ENCODE measurements at regions of chr1 and their contacts with region 1.

Region 1: GRCh38 chr1:182595641-182596240 is 6.7 kb upstream of the RNASEL start:
- DNase-seq: peak; percentile 30
- ATAC-seq: peak; percentile 62
- H3K4me3 ChIP-seq: no peak overlapping the region
- H3K27ac ChIP-seq: no peak overlapping the region
- H3K4me1 ChIP-seq: no peaks in the 10 kb centered on the region
- H3K27me3 ChIP-seq: no peaks in the 10 kb centered on the region; a peak in 1 of 5 replicates
- CTCF ChIP-seq: peak; percentile 68
- EP300 ChIP-seq: no peak
- POLR2A ChIP-seq: no peak
- RAD21 ChIP-seq: no peak

Region 2: DNA sequence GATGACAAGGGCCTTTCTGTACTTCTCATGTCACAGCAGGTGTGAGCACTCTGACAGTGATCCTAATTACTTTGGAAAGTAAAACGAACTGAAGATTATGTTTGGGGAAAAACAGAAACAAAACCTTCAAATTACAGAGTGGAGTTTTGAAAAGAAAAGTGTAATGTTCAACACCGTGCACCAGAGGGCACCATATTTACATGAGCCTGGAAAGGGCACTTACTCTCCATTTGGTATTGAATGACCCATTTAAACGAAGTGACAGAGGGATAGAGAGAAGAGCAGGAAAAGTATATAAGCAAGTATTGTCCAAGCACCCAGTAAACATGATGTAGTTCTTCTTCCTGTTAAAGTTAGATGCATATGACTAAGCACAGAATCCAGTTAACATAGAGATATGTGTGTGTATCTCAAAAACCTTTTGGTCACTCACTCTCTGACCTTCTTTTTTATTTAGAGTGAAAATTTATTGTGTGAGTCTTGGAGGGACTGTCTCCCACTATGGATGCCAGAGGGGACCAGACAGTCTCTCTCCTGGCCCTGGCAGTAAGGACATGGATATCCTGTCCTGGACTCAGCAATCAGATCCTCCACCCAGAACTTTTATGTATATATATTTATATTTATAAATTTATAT is 149.6 kb before region 1 on chr1:
- CTCF ChIA-PET with region 1: no interaction called
- POLR2A ChIA-PET with region 1: no interaction called
- in situ Hi-C with region 1: loop called (anchors 10 kb)
- intact Hi-C with region 1: loop called (anchors 5 kb)
- DNase-seq: peak; percentile 39
- ATAC-seq: peak; percentile 65
- H3K4me3 ChIP-seq: no peak overlapping the region
- H3K27ac ChIP-seq: no peak overlapping the region
- H3K4me1 ChIP-seq: no peaks in the 10 kb centered on the region
- H3K27me3 ChIP-seq: no peaks in the 10 kb centered on the region
- CTCF ChIP-seq: peak; percentile 76
- EP300 ChIP-seq: no peak
- POLR2A ChIP-seq: no peak
- RAD21 ChIP-seq: peak; percentile 43; the same call in 1 of the 2 replicates

Region 3: DNA sequence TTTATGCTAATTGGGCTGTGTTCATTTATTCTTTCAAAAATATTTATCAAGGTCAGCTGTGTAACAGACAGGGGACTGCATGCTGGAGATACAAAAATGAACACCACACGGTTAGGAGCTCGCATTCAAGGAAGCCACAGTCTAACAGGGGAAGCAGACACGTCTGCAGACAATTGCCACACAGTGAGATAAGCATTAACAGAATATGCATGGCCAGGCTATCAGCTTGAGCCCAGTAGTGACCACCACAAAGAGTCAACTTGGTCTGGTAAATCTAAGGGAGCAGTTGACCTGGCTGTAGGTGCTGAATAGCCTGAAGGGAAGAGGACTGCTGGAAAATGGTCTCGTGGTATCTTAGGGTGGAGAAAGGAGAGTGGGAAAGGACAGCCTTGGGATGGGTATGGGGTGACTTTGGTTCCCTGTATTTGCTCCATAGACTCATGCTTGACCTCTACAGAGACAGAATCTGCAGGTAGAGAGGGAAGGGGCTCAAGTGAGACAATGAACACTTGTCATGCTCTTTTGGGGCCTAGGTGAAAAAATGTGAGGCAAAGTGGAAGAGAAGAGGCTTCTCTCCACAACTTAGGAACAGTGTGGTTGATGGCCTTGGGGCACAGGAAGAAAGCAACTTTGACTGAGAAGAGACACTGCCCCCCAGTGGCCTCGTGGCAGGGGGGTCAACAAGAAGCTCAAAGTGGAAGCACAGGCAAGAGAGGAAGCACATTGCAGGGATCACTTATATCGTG is 186.3 kb after region 1 on chr1:
- CTCF ChIA-PET with region 1: interaction called, 44 read pairs
- POLR2A ChIA-PET with region 1: no interaction called
- in situ Hi-C with region 1: loop called (anchors 5 kb)
- intact Hi-C with region 1: no loop called
- DNase-seq: peak; percentile 28
- ATAC-seq: peak; percentile 90
- H3K4me3 ChIP-seq: no peak overlapping the region
- H3K27ac ChIP-seq: no peak overlapping the region
- H3K4me1 ChIP-seq: no peaks in the 10 kb centered on the region
- H3K27me3 ChIP-seq: no peaks in the 10 kb centered on the region
- CTCF ChIP-seq: peak; percentile 74
- EP300 ChIP-seq: no peak
- POLR2A ChIP-seq: no peak
- RAD21 ChIP-seq: no peak